Mammary epithelial cell (primary cell): ENCODE measurements at regions of chr1 and their contacts with region 1.

Region 1: DNA sequence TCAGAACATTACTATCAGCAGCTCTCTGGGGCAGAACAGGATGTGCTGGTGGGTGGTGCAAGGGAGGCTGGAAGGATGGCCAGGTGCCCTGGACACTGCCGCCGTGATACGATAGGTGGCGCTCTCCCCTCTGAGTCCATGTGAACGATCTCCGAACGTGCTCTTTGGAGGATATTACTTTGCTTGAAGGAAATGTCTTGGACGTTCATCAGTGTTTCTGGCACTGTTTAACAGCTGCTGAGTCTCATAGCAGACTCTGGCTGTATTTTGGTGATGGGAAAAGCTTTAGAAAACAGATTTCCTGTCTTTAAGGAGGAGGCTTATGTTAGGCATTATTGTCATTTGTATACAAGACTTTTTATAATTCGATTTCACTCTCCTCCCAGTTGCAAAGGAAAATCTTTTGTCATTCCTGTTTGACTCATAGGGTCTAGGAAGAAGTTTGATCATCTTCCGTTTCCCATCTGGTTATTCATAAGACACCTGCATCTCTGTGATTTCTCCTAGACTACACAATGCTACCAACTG is 386.2 kb upstream of the ADGRL2 start:
- DNase-seq: no peak
- H3K4me3 ChIP-seq: no peak overlapping the region
- H3K27ac ChIP-seq: no peak overlapping the region
- H3K4me1 ChIP-seq: no peaks in the 10 kb centered on the region
- H3K27me3 ChIP-seq: no peaks in the 10 kb centered on the region
- CTCF ChIP-seq: peak; percentile 53 to 58

Region 2: GRCh38 chr1:81392526-81393226 is 21.9 kb before region 1 on chr1:
- CTCF ChIA-PET with region 1: interaction called, 18 read pairs
- dilution Hi-C with region 1: no loop called
- in situ Hi-C with region 1: no loop called
- intact Hi-C with region 1: no loop called
- DNase-seq: no peak
- H3K4me3 ChIP-seq: no peak overlapping the region
- H3K27ac ChIP-seq: no peak overlapping the region
- H3K4me1 ChIP-seq: no peaks in the 10 kb centered on the region
- H3K27me3 ChIP-seq: peaks cover 2% of the 10 kb centered on the region
- CTCF ChIP-seq: no peak